ENCODE measurements at regions of chr7 and their contacts with region 1.

Region 1: GRCh38 chr7:94763268-94763667 is 107.3 kb upstream of the SGCE start:
- DNase-seq: no peak
- ATAC-seq: no peak
- H3K4me3 ChIP-seq: no peak overlapping the region
- H3K27ac ChIP-seq: no peak overlapping the region
- H3K4me1 ChIP-seq: no peaks in the 10 kb centered on the region
- H3K27me3 ChIP-seq: no peaks in the 10 kb centered on the region
- CTCF ChIP-seq: no peak
- EP300 ChIP-seq: no peak
- POLR2A ChIP-seq: no peak
- RAD21 ChIP-seq: no peak

Region 2: GRCh38 chr7:94338921-94339371 is 424.3 kb before region 1 on chr7:
- CTCF ChIA-PET with region 1: no interaction called
- POLR2A ChIA-PET with region 1: no interaction called
- in situ Hi-C with region 1: no loop called
- intact Hi-C with region 1: no loop called
- DNase-seq: peak; percentile 34 to 70 (median 52)
- ATAC-seq: peak; percentile 85
- H3K4me3 ChIP-seq: no peak overlapping the region
- H3K27ac ChIP-seq: no peak overlapping the region
- H3K4me1 ChIP-seq: peaks cover 0 to 3% of the 10 kb centered on the region in 2 experiments; a peak in 2 of 5 replicates
- H3K27me3 ChIP-seq: no peaks in the 10 kb centered on the region
- CTCF ChIP-seq: no peak
- EP300 ChIP-seq: no peak
- POLR2A ChIP-seq: no peak
- RAD21 ChIP-seq: peak in 1 of 2 experiments; percentile 34; a peak in 1 of 4 replicates

Region 3: DNA sequence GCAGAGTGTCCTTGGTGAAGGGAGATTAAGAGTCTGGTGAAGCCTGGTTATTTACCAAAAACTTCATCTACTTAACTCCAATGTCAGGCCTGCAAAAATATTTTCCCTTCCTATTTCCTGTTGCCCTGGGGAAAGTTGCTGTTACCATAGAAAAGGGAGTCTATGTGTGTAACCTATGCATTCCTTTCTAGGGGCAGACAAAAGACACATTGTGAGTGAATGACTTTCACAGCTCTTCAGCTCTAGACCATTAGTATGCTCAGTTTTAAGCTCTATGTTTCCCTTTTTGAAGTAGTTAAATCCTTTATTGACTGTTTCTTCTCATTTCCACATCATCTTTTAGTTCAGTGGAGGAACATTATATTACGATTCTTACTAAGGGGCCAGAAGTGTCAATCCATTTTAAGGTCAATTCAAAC is 61.7 kb before region 1 on chr7:
- CTCF ChIA-PET with region 1: no interaction called
- POLR2A ChIA-PET with region 1: no interaction called
- in situ Hi-C with region 1: no loop called
- intact Hi-C with region 1: loop called (anchors 10 kb)
- DNase-seq: no peak
- ATAC-seq: no peak
- H3K4me3 ChIP-seq: no peak overlapping the region
- H3K27ac ChIP-seq: no peak overlapping the region
- H3K4me1 ChIP-seq: no peaks in the 10 kb centered on the region
- H3K27me3 ChIP-seq: no peaks in the 10 kb centered on the region
- CTCF ChIP-seq: no peak
- EP300 ChIP-seq: no peak
- POLR2A ChIP-seq: no peak
- RAD21 ChIP-seq: no peak

Region 4: DNA sequence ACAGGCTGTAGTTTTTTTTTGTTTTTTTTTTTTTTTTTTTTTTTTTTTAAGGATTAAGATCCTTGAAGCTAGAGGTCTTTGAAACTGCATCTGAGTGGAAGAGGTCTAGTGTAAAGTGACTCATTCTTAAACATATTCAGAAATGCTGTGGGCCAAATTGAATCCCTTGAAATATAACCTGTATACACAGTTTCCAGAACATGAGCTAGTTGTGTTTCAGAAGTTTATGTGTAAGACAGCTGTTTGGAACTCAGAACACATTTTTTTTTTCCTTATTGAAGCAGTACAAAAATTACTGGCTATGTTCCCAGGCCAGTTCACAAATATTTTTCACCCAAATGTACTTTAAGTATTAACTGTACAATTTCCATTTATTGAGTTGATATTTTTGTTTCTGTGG is 212.1 kb after region 1 on chr7:
- CTCF ChIA-PET with region 1: no interaction called
- POLR2A ChIA-PET with region 1: no interaction called
- in situ Hi-C with region 1: no loop called
- intact Hi-C with region 1: no loop called
- DNase-seq: no peak
- ATAC-seq: no peak
- H3K4me3 ChIP-seq: no peak overlapping the region
- H3K27ac ChIP-seq: no peak overlapping the region
- H3K4me1 ChIP-seq: no peaks in the 10 kb centered on the region
- H3K27me3 ChIP-seq: no peaks in the 10 kb centered on the region
- CTCF ChIP-seq: no peak
- EP300 ChIP-seq: no peak
- POLR2A ChIP-seq: no peak
- RAD21 ChIP-seq: no peak

Measured in K562 (cell line).